ENCODE measurements at regions of chr14 and their contacts with region 1.

Region 1: DNA sequence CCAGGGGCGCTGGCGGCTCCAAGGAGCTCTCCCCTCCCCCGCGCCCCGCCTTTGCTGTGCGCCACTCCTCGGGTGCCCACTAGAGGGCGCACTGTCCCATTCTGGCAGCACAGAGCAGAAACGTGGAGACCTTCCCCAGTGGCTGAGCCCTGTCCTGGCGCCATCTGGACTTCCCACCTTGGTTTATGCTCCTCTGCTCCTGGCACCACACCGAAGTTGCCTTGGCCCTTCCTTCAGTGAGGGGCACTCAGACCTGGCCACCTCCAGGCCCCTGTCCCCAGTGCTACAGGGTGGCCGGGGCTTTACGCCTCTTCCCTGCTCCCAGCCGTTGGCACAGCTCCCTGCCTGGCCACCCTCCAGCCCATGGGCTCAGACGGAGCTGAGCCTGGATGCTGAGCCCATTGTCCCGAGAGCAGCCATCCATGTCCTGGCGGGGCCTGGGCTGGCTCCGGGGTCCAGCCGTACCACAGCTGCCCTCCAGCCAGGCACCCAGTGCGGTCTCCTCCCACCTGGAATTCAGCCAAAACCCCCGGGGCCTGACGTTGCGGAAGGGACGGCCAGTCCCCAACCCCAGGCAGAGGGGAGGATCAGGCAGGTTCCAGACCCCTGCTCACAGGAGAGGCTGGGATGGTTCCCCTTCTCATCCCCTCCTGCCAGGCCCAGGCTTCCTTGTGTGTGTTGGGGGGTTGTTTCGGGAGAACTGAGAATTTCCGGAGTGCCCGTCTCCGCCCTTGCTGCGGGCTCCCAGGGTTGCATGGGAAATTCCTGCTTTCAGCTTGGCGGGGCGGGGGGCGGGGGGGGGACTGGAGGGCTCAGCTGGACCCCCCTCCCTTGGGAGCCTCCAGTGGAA is 5.5 kb upstream of the CRIP1 start:
- DNase-seq: peak; percentile 96
- ATAC-seq: peak; percentile 62
- H3K4me3 Mint-ChIP-seq: peak overlapping the region; percentile 40
- H3K27ac Mint-ChIP-seq: no peak overlapping the region
- H3K4me1 Mint-ChIP-seq: peaks cover 21% of the 10 kb centered on the region
- H3K27me3 Mint-ChIP-seq: peaks cover 86% of the 10 kb centered on the region
- CTCF ChIP-seq: peak; percentile 97

Region 2: DNA sequence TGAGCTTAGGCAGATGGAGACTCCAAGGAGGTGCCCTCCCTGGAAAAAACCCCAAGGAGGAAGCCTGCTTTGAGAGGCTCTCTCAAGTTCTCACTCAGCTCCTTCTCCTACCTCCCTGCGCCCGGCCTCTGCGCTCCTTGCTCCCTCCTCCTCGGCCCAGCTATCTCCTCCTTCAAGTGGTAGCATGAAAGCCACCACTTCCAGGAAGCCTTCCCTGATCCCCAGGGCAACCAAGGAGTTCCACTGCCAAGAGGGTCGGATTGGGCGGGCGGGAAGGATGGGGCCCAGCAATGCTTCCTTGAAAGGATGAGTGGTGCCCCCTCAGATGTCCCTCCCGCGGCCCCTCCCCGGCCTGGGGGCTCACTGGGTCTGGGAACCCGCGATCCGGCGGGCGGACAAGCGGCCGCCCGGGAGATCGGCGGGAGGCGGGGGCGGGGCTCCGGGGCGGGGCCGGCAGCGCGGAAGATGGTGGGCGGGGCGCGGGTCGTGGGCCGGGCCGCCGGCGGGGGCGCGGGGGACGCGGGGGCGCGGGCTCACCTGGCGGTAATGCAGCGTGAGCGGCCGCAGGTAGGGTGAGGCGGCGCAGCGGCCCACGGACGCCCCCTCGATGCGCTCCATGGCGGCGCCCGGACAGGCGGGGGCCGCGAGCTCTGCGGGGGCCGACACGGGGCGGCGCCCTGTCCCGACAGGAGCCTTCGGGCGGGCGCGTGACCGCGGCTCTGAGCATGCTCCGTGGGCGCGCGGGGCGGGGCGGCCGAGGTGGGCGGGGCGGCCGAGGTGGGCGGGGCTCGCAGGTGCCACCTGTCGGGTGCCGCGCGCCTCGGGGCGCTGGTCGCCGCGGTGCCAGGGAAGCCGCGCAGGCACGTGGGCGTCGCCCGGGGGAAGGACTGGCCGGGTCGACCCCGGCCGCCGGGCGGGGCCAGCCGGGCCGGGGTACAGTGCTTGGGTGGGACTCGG is 300.3 kb before region 1 on chr14 and contains the start of gene NUDT14:
- CTCF ChIA-PET with region 1: interaction called, 14 read pairs
- POLR2A ChIA-PET with region 1: no interaction called
- DNase-seq: peak; percentile 78
- ATAC-seq: peak; percentile 66
- H3K4me3 Mint-ChIP-seq: peak within 1 kb of the TSS; percentile 71
- H3K27ac Mint-ChIP-seq: no peak within 1 kb of the TSS
- H3K4me1 Mint-ChIP-seq: peaks cover 3% of the 10 kb centered on the region; the same call in 1 of the 2 replicates
- H3K27me3 Mint-ChIP-seq: peaks cover 24% of the 10 kb centered on the region
- CTCF ChIP-seq: no peak
- total RNA-seq, gene NUDT14: 35.4 to 56.2 TPM (median 51.3 TPM) in 3 replicates

Region 3: DNA sequence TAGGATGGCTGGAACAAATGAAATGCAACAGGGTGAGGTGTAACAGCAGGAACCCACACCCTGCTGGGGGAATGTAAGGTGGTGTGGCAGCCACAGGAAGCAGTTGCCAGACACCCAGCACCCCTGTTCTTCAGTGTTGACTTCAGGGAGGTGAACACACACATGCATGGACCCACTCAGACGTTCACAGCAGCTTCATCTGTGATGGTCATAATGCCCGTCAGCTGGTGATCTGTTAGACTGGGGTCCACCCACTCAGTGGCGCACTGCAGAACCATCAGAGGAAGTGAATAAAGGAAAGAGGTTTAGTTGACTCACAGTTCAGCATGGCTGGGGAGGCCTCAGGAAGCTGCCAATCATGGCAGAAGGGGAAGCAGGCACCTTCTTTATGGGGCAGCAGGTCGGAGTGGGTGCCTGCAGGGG is 105.5 kb before region 1 on chr14:
- CTCF ChIA-PET with region 1: interaction called, 12 read pairs
- POLR2A ChIA-PET with region 1: no interaction called
- DNase-seq: no peak
- ATAC-seq: no peak
- H3K4me3 Mint-ChIP-seq: no peak overlapping the region
- H3K27ac Mint-ChIP-seq: no peak overlapping the region
- H3K4me1 Mint-ChIP-seq: peaks cover 11% of the 10 kb centered on the region
- H3K27me3 Mint-ChIP-seq: peaks cover 15% of the 10 kb centered on the region
- CTCF ChIP-seq: no peak

Region 4: DNA sequence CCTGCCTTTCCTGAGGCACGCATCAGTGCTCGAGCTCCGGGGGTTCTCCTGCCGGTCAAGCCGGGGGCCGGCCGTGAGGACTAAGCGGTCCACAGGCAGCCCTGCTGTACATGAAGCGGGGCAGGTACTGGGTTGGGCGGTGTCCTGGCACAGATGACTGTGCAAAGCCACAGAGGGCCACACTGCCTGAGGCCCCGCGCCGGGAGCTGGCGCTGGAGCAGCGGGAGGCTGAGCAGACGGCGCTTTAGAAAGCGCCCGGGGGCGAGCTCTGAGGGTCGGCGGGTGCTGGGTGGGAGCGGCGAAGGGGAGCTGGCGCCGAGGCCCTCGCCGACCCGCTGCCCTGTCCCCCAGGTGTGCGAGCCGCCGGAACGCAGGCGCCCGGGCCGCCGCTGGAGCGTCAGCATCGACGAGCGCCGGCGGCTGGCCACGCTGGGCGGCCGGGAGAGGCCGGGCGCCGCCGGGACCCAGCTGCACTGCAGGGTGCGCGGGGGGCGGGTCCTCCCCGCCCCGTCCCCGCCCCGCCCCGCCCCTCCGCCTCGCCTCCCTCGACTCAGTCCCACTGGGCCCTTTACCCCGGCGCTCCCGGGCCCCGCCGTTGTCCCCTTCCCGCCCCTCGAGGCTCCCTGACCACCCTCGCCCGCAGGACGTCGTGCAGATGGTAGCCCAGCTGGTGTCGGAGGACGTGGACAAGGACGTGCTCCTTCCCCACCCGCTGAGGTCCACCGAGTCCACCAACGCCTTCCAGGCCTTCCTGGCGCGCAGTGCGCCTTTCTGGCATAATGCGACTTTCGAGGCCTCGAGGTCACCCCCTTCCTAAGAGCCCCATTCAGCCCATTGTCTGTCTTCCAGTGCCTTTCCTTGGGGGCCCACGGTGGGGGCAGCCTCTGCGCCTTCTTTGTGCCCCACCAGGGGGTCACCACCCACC is 69.9 kb before region 1 on chr14:
- CTCF ChIA-PET with region 1: interaction called, 15 read pairs
- POLR2A ChIA-PET with region 1: no interaction called
- DNase-seq: peak; percentile 14
- ATAC-seq: peak; percentile 35
- H3K4me3 Mint-ChIP-seq: peak overlapping the region; percentile 60
- H3K27ac Mint-ChIP-seq: no peak overlapping the region
- H3K4me1 Mint-ChIP-seq: peaks cover 13% of the 10 kb centered on the region
- H3K27me3 Mint-ChIP-seq: peaks cover 85% of the 10 kb centered on the region
- CTCF ChIP-seq: no peak

Region 5: DNA sequence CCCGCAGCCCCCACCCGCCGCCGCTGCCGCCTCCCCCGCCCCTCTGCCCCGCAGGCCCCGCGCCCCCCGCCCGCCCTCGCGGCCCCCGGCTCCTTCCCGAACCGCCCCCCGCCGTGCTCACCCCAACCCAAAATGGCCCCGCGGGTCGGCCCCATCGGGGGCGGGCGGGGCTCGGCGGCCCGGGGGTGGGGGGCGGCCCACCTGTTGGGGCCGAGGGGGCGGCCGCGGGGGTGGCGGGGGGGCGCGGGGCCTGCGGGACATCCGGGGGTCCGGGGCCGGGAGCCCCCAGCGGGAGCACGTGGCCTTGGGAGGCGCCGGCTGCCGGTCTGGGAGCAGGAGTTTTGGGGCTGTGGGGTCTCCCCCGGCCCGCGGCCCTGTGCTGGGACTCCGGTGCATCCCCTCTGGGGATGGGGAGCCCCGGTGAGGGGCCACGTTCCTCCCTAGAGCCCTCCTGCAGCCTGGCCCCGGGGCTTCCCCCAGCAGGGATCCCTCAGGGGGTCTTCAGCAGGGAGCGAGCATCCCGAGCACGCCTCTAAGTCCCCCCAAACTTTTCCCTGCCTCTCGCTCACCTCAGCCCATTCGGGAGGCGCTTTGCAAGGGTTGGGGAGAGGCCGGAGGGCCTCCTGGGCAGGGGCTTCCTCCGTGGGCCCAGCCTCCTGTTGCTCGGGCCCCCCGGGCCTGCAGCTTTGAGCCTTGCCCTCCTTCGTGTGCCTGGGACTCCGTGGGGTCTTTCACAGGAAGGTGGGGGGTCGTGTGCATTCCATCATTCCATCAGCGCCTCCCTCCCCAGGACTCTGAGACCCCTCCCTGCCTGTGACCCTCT is 60.9 kb before region 1 on chr14:
- CTCF ChIA-PET with region 1: interaction called, 10 read pairs
- POLR2A ChIA-PET with region 1: no interaction called
- DNase-seq: no peak
- ATAC-seq: no peak
- H3K4me3 Mint-ChIP-seq: peak overlapping the region; percentile 90
- H3K27ac Mint-ChIP-seq: peak overlapping the region; percentile 82; the same call in 1 of the 2 replicates
- H3K4me1 Mint-ChIP-seq: peaks cover 26% of the 10 kb centered on the region
- H3K27me3 Mint-ChIP-seq: peaks cover 22% of the 10 kb centered on the region
- CTCF ChIP-seq: no peak

Region 6: GRCh38 chr14:105448706-105449111 is 32.5 kb before region 1 on chr14:
- CTCF ChIA-PET with region 1: interaction called, 13 read pairs
- POLR2A ChIA-PET with region 1: no interaction called
- DNase-seq: peak; percentile 83
- ATAC-seq: peak; percentile 91
- H3K4me3 Mint-ChIP-seq: no peak overlapping the region
- H3K27ac Mint-ChIP-seq: no peak overlapping the region
- H3K4me1 Mint-ChIP-seq: no peaks in the 10 kb centered on the region
- H3K27me3 Mint-ChIP-seq: no peaks in the 10 kb centered on the region
- CTCF ChIP-seq: peak; percentile 77

Region 7: GRCh38 chr14:105456736-105457617 is 24.2 kb before region 1 on chr14:
- CTCF ChIA-PET with region 1: interaction called, 10 read pairs
- POLR2A ChIA-PET with region 1: no interaction called
- DNase-seq: no peak
- ATAC-seq: no peak
- H3K4me3 Mint-ChIP-seq: no peak overlapping the region
- H3K27ac Mint-ChIP-seq: no peak overlapping the region
- H3K4me1 Mint-ChIP-seq: no peaks in the 10 kb centered on the region
- H3K27me3 Mint-ChIP-seq: no peaks in the 10 kb centered on the region
- CTCF ChIP-seq: no peak